Activated B cell treated with CpG ODN at 0.5 μM for 24 hours (primary cell): ENCODE measurements at regions of chr18 and their contacts with region 1.

Region 1: GRCh38 chr18:2985628-2986027 is 27.3 kb downstream of the LPIN2 start:
- DNase-seq: no peak
- ATAC-seq: peak; percentile 82
- H3K4me3 Mint-ChIP-seq: no peak overlapping the region
- H3K27ac Mint-ChIP-seq: no peak overlapping the region
- H3K4me1 Mint-ChIP-seq: peaks cover 55% of the 10 kb centered on the region
- H3K27me3 Mint-ChIP-seq: no peaks in the 10 kb centered on the region
- CTCF ChIP-seq: no peak

Region 2: GRCh38 chr18:1825296-1825695 is 1160.3 kb before region 1 on chr18:
- CTCF ChIA-PET with region 1: no interaction called
- POLR2A ChIA-PET with region 1: no interaction called
- intact Hi-C with region 1: no loop called
- DNase-seq: no peak
- ATAC-seq: no peak
- H3K4me3 Mint-ChIP-seq: no peak overlapping the region
- H3K27ac Mint-ChIP-seq: no peak overlapping the region
- H3K4me1 Mint-ChIP-seq: no peaks in the 10 kb centered on the region
- H3K27me3 Mint-ChIP-seq: no peaks in the 10 kb centered on the region
- CTCF ChIP-seq: no peak

Region 3: DNA sequence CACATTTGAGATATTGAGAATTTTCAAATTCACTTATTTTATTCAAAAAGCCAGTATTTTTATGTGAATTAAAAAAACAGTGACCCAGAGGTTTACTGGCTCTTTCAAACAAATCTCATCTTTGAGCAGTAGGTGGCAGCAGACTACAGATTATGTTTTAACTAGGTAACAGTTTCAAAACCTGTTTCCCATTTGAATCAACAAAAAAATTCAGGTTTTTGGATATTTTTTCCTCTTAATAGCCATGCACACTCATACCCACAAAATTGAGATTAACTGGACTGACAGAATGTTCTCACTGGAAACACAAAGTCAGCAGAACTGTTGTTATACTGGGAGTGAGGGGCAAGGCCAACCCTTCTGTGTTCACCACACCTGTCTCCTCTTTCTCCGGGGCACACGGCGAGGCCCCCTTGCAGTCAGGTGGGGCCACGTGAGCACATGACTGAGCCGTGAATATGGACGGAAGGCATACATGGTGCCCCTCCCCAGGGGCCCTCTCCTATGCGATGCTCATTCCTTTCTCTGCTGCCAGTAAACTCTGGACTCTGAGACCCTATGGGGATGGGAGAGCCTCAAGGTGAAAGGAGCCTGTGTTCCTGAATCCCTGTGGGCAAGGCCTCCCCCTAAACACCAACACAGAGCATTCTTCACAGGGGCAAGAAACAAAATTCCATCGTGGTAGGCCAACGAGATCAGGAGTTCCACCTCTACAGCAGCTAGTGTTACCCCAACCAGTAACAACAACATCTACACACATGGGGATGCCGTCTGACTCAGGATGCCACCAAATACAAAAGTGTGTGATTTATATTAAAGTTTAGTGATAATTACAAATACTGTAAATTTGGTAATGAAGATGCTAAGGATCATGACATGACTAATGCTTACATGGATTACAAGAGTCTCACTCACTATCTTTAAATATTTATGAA is 53.1 kb before region 1 on chr18:
- CTCF ChIA-PET with region 1: interaction called, 162 read pairs
- POLR2A ChIA-PET with region 1: interaction called, 10 read pairs
- intact Hi-C with region 1: loop called (anchors 1 kb)
- DNase-seq: no peak
- ATAC-seq: peak; percentile 66
- H3K4me3 Mint-ChIP-seq: no peak overlapping the region
- H3K27ac Mint-ChIP-seq: peak overlapping the region; percentile 76
- H3K4me1 Mint-ChIP-seq: peaks cover 8% of the 10 kb centered on the region
- H3K27me3 Mint-ChIP-seq: no peaks in the 10 kb centered on the region
- CTCF ChIP-seq: peak; percentile 49

Region 4: GRCh38 chr18:2948038-2948437 is 37.6 kb before region 1 on chr18:
- CTCF ChIA-PET with region 1: interaction called, 76 read pairs
- POLR2A ChIA-PET with region 1: interaction called, 7 read pairs
- intact Hi-C with region 1: no loop called
- DNase-seq: no peak
- ATAC-seq: no peak
- H3K4me3 Mint-ChIP-seq: no peak overlapping the region
- H3K27ac Mint-ChIP-seq: no peak overlapping the region
- H3K4me1 Mint-ChIP-seq: no peaks in the 10 kb centered on the region
- H3K27me3 Mint-ChIP-seq: no peaks in the 10 kb centered on the region
- CTCF ChIP-seq: no peak

Region 5: GRCh38 chr18:2971741-2972552 is 13.7 kb before region 1 on chr18:
- CTCF ChIA-PET with region 1: interaction called, 17 read pairs
- POLR2A ChIA-PET with region 1: interaction called, 30 read pairs
- intact Hi-C with region 1: loop called (anchors 1 kb)
- DNase-seq: peak; percentile 53
- ATAC-seq: peak; percentile 80
- H3K4me3 Mint-ChIP-seq: peak overlapping the region; percentile 79
- H3K27ac Mint-ChIP-seq: peak overlapping the region; percentile 94
- H3K4me1 Mint-ChIP-seq: peaks cover 82% of the 10 kb centered on the region
- H3K27me3 Mint-ChIP-seq: no peaks in the 10 kb centered on the region
- CTCF ChIP-seq: no peak

Region 6: GRCh38 chr18:3129053-3129864 is 143.6 kb after region 1 on chr18:
- CTCF ChIA-PET with region 1: interaction called, 20 read pairs
- POLR2A ChIA-PET with region 1: no interaction called
- intact Hi-C with region 1: loop called (anchors 2 kb)
- DNase-seq: peak; percentile 59
- ATAC-seq: peak; percentile 99
- H3K4me3 Mint-ChIP-seq: no peak overlapping the region
- H3K27ac Mint-ChIP-seq: no peak overlapping the region
- H3K4me1 Mint-ChIP-seq: peaks cover 6% of the 10 kb centered on the region
- H3K27me3 Mint-ChIP-seq: no peaks in the 10 kb centered on the region
- CTCF ChIP-seq: peak; percentile 16